Testis (tissue), 5 donors: ENCODE measurements at regions of chr12 and their contacts with region 1.

Region 1: DNA sequence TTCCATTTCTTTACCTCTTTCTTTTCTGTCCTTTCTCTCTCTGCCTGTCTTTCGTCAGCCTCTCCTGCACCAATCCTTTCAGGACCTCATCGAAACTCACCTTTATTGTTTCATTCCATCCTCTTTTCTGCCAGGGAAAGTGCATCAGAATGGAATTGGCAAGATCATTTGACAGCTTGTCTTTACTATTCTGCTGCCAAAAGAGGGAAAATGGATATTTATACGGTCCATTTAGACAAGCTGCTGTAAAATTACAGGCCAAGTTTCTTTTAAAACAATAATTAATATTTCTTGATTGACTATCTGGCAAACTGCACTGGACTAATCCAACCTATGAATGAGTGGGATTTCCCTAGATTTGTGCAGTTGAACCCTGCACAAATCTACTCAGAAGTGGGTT is 7.6 kb upstream of the SRGAP1 start:
- DNase-seq: no peak
- H3K4me3 ChIP-seq: no peak overlapping the region
- H3K27ac ChIP-seq: no peak overlapping the region
- H3K4me1 ChIP-seq: no peaks in the 10 kb centered on the region
- H3K27me3 ChIP-seq: no peaks in the 10 kb centered on the region
- CTCF ChIP-seq: no peak
- POLR2A ChIP-seq: no peak

Region 2: GRCh38 chr12:64256166-64256800 is 419.3 kb after region 1 on chr12:
- intact Hi-C with region 1: loop called (anchors 10 kb)
- DNase-seq: no peak
- H3K4me3 ChIP-seq: peak overlapping the region in 1 of 2 donors; percentile 15
- H3K27ac ChIP-seq: no peak overlapping the region
- H3K4me1 ChIP-seq: no peaks in the 10 kb centered on the region
- H3K27me3 ChIP-seq: no peaks in the 10 kb centered on the region
- CTCF ChIP-seq: peak; percentile 62 to 72 (median 70)
- POLR2A ChIP-seq: no peak